Gastrocnemius medialis (tissue), 4 donors: ENCODE measurements at regions of chr1 and their contacts with region 1.

Region 1: DNA sequence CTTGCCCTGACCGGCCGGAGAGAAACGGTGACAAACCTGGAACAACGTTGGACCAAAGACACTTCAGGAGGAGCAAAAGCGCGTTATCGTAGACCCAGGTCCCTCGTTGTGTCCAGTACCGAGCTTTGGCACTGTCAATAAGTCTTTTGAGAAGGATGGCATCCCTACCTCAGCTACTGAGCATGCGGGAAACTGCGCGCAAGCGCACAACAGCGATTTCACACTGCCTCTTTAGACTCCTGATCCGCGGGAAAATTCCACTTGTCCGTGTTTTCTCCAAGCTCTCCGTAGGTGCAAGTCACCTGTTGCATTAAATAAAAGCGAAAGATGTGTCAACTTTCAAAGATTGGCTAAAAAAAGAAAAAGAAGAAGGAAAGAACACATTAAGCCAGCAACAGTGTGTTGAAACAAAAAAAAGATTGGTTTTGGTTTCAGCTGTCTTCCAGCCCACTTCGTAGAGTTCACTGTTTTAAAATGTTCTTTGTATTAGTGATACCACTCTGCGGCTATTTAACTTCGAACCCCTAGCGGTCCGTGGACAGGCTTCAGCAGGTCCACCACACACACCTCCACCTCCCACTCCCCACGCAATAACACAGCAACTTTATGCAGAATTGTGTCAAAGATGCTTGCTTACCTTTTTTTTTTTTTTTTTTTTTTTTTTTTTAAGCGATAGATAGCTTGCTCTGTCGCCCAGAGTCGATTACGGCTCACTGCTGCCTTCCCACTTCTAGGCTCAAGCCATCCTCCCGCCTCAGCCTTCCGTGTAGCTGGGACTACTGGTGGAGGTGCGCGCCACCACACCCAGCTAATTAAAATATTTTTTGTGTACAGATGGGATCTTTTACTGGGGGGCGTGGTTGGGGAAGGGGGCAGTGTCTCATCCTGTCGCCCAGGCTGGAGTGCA is at the start of gene BPNT1:
- DNase-seq: peak; percentile 91 to 94
- ATAC-seq: peak; percentile 85 to 91
- H3K4me3 ChIP-seq: peak within 1 kb of the TSS; percentile 57 to 77 (median 66)
- H3K27ac ChIP-seq: peak within 1 kb of the TSS; percentile 68 to 75 (median 73)
- H3K4me1 ChIP-seq: peaks cover 11 to 13% of the 10 kb centered on the region in 2 donors
- H3K27me3 ChIP-seq: no peaks in the 10 kb centered on the region
- CTCF ChIP-seq: peak in 1 of 5 experiments; percentile 25
- POLR2A ChIP-seq: peak; percentile 17 to 63
- total RNA-seq, gene BPNT1: 5.2 to 27.5 (median 9.2) TPM

Region 2: DNA sequence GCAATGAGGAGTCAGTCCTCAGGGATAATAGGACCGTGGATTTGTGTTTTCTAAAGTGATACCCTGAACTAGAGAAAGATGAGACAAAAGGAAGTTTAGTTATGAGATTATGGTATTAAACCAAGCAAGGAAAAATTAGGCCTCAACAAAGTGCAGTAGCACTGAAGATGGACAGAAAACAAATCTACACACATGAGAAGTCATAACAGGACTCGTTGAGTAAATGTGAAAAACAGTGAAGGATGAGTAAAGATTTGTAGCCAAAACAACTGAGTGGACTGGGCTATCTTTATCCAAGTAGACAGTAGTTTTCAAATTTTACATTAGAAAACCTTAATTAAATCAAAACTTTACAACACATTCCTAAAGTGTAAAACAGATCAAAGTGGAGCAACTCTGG is 58.6 kb before region 1 on chr1:
- in situ Hi-C with region 1: no loop called
- intact Hi-C with region 1: no loop called
- DNase-seq: no peak
- ATAC-seq: no peak
- H3K4me3 ChIP-seq: no peak overlapping the region
- H3K27ac ChIP-seq: no peak overlapping the region
- H3K4me1 ChIP-seq: no peaks in the 10 kb centered on the region
- H3K27me3 ChIP-seq: no peaks in the 10 kb centered on the region
- CTCF ChIP-seq: no peak
- POLR2A ChIP-seq: no peak

Region 3: GRCh38 chr1:220046052-220046930 is 43.6 kb before region 1 on chr1 and contains the start of gene EPRS1:
- in situ Hi-C with region 1: no loop called
- intact Hi-C with region 1: loop called (anchors 1 kb)
- DNase-seq: peak; percentile 90 to 95
- ATAC-seq: peak; percentile 97 to 98
- H3K4me3 ChIP-seq: peak within 1 kb of the TSS; percentile 72 to 93 (median 86)
- H3K27ac ChIP-seq: peak within 1 kb of the TSS; percentile 87 to 90 (median 87)
- H3K4me1 ChIP-seq: peaks cover 15 to 20% of the 10 kb centered on the region in 2 donors
- H3K27me3 ChIP-seq: no peaks in the 10 kb centered on the region
- CTCF ChIP-seq: peak; percentile 70 to 91 (median 85)
- POLR2A ChIP-seq: peak; percentile 70 to 71
- total RNA-seq, gene EPRS1: 47.4 to 89.6 (median 73.9) TPM